OCI-LY7 (cell line): ENCODE measurements at regions of chr10 and their contacts with region 1.

Region 1: GRCh38 chr10:60444494-60445064 is 54.9 kb upstream of the ANK3 start:
- DNase-seq: no peak
- H3K4me3 ChIP-seq: no peak overlapping the region
- H3K27ac ChIP-seq: no peak overlapping the region
- H3K4me1 ChIP-seq: no peaks in the 10 kb centered on the region
- CTCF ChIP-seq: peak; percentile 78

Region 2: DNA sequence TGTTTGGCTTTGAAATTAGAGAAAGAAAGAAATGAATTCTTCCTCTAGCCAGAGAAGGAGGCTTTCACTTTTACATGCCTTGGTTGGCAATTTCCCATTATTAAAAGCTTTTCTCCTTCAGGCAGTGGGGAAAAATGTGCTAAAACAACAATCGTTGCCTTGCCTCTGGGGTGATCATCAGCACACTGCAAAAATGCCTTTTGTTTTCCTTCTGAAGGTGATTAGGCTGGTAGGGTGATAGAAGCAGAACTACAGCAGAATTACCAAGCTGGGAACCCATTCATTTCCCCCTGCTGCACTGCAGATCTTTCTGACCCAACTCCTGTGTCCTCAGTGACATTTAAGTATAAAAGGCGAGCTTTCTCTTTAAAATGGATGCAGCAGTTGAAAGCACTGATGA is 77.1 kb before region 1 on chr10:
- CTCF ChIA-PET with region 1: no interaction called
- POLR2A ChIA-PET with region 1: no interaction called
- intact Hi-C with region 1: no loop called
- DNase-seq: no peak
- H3K4me3 ChIP-seq: no peak overlapping the region
- H3K27ac ChIP-seq: no peak overlapping the region
- H3K4me1 ChIP-seq: no peaks in the 10 kb centered on the region
- CTCF ChIP-seq: no peak

Region 3: GRCh38 chr10:60646966-60647796 is 202.6 kb after region 1 on chr10:
- CTCF ChIA-PET with region 1: no interaction called
- POLR2A ChIA-PET with region 1: no interaction called
- intact Hi-C with region 1: loop called (anchors 1 kb)
- DNase-seq: peak; percentile 63
- H3K4me3 ChIP-seq: no peak overlapping the region
- H3K27ac ChIP-seq: no peak overlapping the region
- H3K4me1 ChIP-seq: peaks cover under 1% of the 10 kb centered on the region
- CTCF ChIP-seq: peak; percentile 93